Activated CD4-positive, alpha-beta T cell treated with anti-CD3 and anti-CD28 coated beads for 36 hours (primary cell): ENCODE measurements at regions of chr3 and their contacts with region 1.

Region 1: DNA sequence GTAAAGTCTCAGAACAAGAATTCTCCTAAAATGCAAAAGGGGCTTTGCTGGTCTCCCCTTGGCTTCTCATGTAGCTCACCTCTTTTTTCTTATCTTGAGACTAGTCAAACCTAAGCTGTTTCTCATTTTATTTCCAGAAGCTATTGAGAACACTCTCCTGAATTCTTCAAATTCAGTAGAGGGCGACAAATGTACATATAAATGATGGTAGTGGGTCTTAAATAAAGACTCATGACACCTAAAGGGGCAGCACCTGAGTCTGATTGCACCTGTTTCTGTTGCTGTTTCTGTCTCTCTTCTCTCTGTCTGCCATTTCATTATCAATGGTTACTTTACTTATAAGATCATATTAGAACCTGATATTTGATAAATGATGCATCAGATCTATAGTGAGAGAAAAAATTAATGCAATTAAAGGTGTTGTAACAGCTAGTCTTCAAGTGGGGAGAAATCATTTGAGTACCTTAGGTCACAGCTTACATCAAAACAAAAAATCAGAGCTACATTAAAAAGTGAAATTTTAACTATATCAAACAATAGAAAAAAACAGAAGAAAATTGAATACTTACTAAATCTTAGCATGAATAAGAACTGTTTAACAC is 7.0 kb downstream of the ADIPOQ start:
- DNase-seq: peak; percentile 32
- ATAC-seq: peak; percentile 90
- H3K4me3 Mint-ChIP-seq: no peak overlapping the region
- H3K27ac Mint-ChIP-seq: peak overlapping the region; percentile 52
- H3K4me1 Mint-ChIP-seq: peaks cover 18% of the 10 kb centered on the region
- H3K27me3 Mint-ChIP-seq: peaks cover 7% of the 10 kb centered on the region

Region 2: DNA sequence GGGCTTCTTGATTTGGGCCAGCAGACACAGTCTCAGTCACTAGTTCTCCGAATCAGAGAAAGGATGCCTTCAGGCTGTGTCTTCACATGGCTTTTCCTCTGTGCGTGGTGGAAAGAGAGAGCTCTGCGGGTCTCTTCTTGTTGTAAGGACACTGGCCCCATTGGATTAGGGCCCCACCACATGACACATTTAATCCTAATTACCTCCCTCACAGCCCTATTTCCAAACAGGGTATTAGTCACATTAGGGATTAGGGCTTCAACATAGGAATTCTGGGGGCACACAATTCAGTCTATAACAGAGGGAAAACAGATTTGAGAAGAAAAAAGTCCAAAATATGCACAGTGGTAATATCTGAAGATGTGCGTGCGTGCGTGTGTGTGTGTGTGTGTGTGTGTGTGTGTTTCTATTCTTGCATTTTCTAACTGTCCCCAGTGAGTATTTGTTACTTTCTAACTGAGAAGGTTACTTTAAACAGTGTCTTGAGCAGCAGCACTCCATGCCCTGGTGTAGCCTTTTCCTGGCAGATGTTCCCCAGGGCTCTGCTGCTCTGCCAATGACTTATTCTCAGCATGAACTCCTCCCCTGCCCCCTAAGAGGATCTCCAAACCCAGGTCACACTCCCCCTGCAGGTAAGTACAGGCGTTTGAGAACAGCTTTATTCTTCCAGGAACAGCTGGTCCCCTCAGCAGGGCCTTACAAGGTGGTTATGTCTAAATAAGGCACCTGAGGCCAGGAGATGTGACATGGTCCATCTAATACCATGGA is 216.9 kb after region 1 on chr3:
- CTCF ChIA-PET with region 1: interaction called, 41 read pairs
- POLR2A ChIA-PET with region 1: no interaction called
- intact Hi-C with region 1: loop called in 1 of 2 experiments (anchors 2 kb)
- DNase-seq: peak; percentile 65
- ATAC-seq: peak; percentile 74
- H3K4me3 Mint-ChIP-seq: no peak overlapping the region
- H3K27ac Mint-ChIP-seq: peak overlapping the region; percentile 61
- H3K4me1 Mint-ChIP-seq: peaks cover 61% of the 10 kb centered on the region
- H3K27me3 Mint-ChIP-seq: no peaks in the 10 kb centered on the region

Region 3: DNA sequence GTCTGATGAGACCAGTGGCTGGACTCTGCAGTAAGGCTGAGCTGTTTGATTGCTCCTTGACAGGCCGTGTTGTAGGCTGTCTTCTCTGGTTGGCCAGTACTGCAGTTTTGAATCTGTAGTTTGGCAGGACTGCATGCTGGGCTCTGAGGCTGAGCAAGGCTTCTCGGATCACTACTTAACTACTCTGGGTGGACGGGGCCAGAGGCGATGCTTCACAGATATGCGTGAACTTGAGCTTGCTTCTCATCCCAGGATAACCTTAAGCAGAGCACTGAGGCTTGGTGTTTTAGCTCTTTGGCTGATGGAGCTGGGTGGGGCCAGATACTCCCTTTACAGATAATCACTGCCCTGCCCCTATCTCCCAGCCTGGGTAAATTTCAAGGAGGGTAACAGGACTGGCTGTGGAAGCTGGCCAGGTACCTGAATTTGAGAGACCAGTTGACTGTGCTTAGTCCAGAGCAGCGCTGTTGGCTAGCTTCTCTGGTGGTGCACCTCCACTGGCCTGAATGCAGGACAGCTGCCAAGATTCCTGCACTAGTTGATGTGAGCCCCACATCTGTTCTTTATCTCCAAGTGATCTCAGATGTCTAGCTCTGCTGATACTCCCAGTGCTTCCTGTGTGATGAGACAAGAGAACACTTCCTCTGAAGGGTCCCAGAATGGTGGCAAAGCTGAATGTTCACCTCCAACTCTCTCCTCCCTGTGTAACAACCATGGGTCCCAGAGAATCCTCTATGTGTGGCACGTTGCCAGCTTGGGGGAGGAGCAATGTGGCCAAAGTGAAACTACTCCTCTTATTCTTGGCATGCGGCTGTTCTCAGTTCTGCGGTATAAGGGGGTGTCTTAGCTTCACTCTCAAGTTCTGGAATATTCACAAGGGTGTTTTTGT is 252.0 kb after region 1 on chr3:
- CTCF ChIA-PET with region 1: interaction called, 10 read pairs
- POLR2A ChIA-PET with region 1: no interaction called
- intact Hi-C with region 1: no loop called
- DNase-seq: peak; percentile 67
- ATAC-seq: peak; percentile 70
- H3K4me3 Mint-ChIP-seq: peak overlapping the region; percentile 20
- H3K27ac Mint-ChIP-seq: peak overlapping the region; percentile 62
- H3K4me1 Mint-ChIP-seq: peaks cover 32% of the 10 kb centered on the region
- H3K27me3 Mint-ChIP-seq: no peaks in the 10 kb centered on the region

Region 4: GRCh38 chr3:187150599-187150998 is 301.1 kb after region 1 on chr3:
- CTCF ChIA-PET with region 1: interaction called, 9 read pairs
- POLR2A ChIA-PET with region 1: no interaction called
- intact Hi-C with region 1: loop called in 1 of 2 experiments (anchors 1 kb)
- DNase-seq: peak; percentile 82
- ATAC-seq: peak; percentile 86
- H3K4me3 Mint-ChIP-seq: no peak overlapping the region
- H3K27ac Mint-ChIP-seq: no peak overlapping the region
- H3K4me1 Mint-ChIP-seq: peaks cover 5% of the 10 kb centered on the region
- H3K27me3 Mint-ChIP-seq: peaks cover 2% of the 10 kb centered on the region